ENCODE measurements at regions of chr9 and their contacts with region 1.

Region 1: GRCh38 chr9:128094166-128094967 is 26.3 kb downstream of the SLC25A25 start:
- DNase-seq: peak; percentile 91
- CTCF ChIP-seq: no peak

Region 2: DNA sequence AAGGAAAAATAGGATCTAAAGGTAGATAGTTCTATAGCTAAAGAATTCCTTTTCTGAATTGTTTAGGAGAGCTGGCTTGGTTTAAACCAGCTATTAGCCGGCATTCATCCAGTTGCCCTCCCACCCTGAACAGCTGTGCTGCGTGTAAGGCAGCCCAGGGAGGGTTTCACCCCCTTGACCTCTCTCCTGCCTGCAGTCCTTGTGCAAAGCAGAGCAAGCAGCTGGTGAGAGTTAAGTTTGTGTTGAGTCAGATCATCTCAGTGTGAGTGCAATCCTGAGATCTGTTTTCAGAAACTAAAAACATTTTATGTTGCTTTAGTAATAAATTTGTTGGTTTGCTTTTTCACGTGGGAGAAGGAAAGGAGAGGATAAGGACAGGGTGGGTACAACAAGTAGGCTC is 13.3 kb before region 1 on chr9:
- CTCF ChIA-PET with region 1: interaction called, 27 read pairs
- POLR2A ChIA-PET with region 1: no interaction called
- DNase-seq: no peak
- CTCF ChIP-seq: no peak

Region 3: DNA sequence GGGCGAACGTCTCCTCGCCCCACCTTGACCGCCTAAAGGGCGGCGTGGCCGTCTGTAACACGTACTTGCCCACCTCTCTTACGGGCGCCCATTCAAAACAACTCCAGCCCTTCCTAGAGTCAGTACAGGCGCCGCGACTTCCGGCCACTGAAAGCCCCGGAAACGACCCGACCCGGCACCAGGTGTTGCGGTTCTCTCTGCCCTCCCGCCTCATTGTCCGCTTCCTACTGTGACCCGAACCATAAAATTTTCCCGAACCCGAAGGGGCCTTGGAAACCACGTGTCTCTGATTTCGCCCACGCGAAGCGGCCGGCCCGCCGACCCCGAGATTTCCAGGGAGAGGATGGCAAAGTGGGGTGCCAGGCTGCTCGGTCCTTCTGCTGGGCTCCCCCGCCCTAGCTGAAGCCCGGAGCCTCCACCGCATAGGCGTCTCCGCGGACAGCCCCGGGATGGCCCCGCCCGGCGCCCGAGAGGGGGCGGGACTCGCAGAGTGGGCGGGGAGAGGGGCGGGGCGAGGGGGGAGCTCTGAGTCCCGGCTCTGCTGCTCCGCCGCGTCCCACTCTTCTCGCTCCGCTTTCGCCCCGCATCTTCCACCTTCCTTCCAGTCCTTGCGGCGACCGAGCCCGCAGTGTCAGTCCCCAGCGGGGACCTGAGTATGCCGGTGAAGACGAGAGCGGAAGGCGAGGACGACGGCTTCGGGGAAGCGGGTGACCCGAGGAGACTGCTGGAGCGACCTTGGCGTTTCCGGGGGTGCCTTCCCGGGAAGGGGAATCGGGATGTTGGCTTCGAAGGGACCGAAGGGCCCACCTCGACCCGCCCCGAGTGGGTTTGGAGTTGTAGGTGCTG is 33.8 kb after region 1 on chr9:
- CTCF ChIA-PET with region 1: interaction called, 12 read pairs
- POLR2A ChIA-PET with region 1: no interaction called
- DNase-seq: peak; percentile 91
- CTCF ChIP-seq: no peak